Activated CD8-positive, alpha-beta T cell treated with anti-CD3 and anti-CD28 coated beads for 36 hours (primary cell): ENCODE measurements at regions of chr9 and their contacts with region 1.

Region 1: DNA sequence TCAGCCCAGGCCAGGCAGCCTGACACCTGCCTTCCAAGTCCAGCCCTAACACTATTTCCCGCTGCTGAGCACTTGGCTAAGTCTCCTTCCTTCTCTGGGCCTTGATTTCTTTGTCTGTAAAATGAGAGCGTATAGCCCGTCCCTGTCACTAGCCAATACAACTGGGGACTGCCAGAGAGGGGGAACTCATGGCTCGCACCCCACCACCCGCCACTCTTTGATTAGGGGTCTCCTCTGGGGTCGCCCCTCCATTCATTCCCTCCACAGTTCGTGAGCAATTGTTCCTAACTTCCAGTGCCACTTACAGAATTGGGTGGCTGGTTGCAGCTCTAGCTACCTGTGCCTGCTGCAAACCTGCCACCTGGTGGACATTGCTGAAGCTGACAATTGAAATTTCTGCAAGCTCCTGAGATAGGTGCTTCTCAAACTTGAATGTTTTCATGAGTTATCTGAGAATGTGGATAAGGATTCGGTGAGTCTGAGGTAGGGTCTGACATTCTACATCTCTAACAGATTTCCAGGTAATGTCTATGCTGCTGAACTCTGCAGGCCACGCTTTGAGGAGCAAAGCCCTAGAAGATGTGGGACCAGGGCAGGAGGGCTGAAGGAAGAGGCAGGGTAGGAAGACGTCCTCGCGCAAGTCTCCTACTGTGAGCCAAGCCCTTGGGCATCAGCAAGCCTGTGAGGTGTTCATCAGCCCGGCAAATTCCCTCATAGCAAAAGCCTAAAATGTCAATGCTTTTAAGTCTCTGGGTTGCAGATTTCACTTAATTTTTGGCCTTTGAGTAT is 13.3 kb upstream of the RECK start:
- DNase-seq: peak; percentile 78
- ATAC-seq: peak; percentile 75
- H3K4me3 Mint-ChIP-seq: no peak overlapping the region
- H3K27ac Mint-ChIP-seq: no peak overlapping the region
- H3K4me1 Mint-ChIP-seq: no peaks in the 10 kb centered on the region
- H3K27me3 Mint-ChIP-seq: no peaks in the 10 kb centered on the region
- CTCF ChIP-seq: peak; percentile 89

Region 2: GRCh38 chr9:35636135-35636876 is 387.1 kb before region 1 on chr9:
- CTCF ChIA-PET with region 1: no interaction called
- POLR2A ChIA-PET with region 1: no interaction called
- intact Hi-C with region 1: no loop called
- DNase-seq: no peak
- ATAC-seq: no peak
- H3K4me3 Mint-ChIP-seq: no peak overlapping the region
- H3K27ac Mint-ChIP-seq: peak overlapping the region; percentile 80
- H3K4me1 Mint-ChIP-seq: peaks cover 63% of the 10 kb centered on the region
- H3K27me3 Mint-ChIP-seq: no peaks in the 10 kb centered on the region
- CTCF ChIP-seq: no peak

Region 3: DNA sequence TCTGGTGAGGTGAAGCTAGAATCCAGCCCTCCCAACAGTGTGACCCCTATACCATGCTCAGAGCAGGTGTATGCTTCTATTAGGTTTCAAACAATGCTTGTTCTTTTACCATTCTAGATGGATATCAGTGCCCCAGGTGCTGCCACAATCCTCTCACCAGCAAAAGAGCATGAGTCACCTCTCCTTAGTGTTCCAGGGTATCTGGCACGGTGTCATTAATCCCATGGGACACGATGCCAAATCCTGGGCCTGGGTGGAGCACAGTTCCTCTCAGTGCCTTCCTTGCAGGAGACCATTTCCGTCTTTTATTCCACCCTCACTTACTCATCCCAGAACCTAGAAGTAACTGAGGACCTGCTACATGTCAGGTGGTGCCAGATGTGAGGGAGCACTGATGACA is 152.0 kb before region 1 on chr9:
- CTCF ChIA-PET with region 1: no interaction called
- POLR2A ChIA-PET with region 1: no interaction called
- intact Hi-C with region 1: no loop called
- DNase-seq: no peak
- ATAC-seq: no peak
- H3K4me3 Mint-ChIP-seq: no peak overlapping the region
- H3K27ac Mint-ChIP-seq: no peak overlapping the region
- H3K4me1 Mint-ChIP-seq: no peaks in the 10 kb centered on the region
- H3K27me3 Mint-ChIP-seq: peaks cover 2% of the 10 kb centered on the region
- CTCF ChIP-seq: no peak

Region 4: GRCh38 chr9:35945341-35946018 is 78.0 kb before region 1 on chr9:
- CTCF ChIA-PET with region 1: interaction called, 15 read pairs
- POLR2A ChIA-PET with region 1: no interaction called
- intact Hi-C with region 1: no loop called
- DNase-seq: peak; percentile 81
- ATAC-seq: peak; percentile 79
- H3K4me3 Mint-ChIP-seq: no peak overlapping the region
- H3K27ac Mint-ChIP-seq: no peak overlapping the region
- H3K4me1 Mint-ChIP-seq: peaks cover 20% of the 10 kb centered on the region
- H3K27me3 Mint-ChIP-seq: no peaks in the 10 kb centered on the region
- CTCF ChIP-seq: peak; percentile 96

Region 5: DNA sequence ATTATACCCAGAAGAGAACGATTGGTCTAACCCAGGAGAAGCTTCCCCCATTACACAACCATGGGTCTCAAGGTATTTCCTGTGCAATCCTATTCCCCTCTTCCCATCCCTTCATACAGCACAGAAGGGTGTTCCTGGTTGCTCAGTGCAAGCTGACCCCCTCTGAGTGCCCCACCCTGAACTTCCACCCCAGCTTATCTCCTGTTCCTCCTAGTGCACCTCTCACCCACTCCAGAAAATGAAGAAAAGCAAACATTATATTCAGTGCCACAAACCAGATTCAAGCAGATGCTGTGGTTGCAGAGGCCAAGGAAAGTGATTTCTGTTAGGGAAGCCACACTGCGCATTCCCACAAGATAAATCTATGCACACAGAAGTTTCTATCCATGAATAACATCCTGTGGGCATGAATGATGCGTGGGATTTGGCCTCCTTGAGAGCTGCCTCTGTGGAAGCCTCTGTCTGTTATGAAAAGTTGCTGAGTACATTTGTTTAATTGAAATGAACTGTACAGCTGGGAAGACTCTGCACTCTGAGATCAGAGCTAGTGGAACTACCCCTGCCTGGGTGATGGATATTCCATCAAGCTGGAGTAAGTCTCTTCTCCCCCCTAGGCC is 63.3 kb before region 1 on chr9:
- CTCF ChIA-PET with region 1: interaction called, 59 read pairs
- POLR2A ChIA-PET with region 1: no interaction called
- intact Hi-C with region 1: loop called (anchors 5 kb)
- DNase-seq: no peak
- ATAC-seq: no peak
- H3K4me3 Mint-ChIP-seq: no peak overlapping the region
- H3K27ac Mint-ChIP-seq: no peak overlapping the region
- H3K4me1 Mint-ChIP-seq: no peaks in the 10 kb centered on the region
- H3K27me3 Mint-ChIP-seq: no peaks in the 10 kb centered on the region
- CTCF ChIP-seq: no peak

Region 6: DNA sequence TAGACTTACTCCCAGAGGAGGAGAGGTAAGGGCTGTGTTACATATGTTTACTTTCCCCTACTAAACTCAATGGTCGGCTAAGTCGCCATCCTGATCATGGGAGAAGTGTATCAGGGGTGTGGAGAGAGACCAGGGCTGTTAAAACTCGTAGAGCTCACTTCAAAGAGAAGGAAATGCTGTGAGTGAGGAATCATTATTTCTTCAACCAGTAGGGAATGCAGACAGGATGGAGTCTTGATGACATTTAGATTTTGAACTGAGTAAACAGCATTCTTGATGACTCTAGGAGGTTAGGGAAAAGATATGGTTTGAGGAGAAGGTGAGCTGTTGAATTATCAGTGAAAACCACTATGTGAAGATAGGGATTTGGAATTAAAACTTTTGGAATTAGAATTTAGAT is 30.5 kb after region 1 on chr9:
- CTCF ChIA-PET with region 1: interaction called, 21 read pairs
- POLR2A ChIA-PET with region 1: interaction called, 5 read pairs
- intact Hi-C with region 1: no loop called
- DNase-seq: no peak
- ATAC-seq: no peak
- H3K4me3 Mint-ChIP-seq: no peak overlapping the region
- H3K27ac Mint-ChIP-seq: no peak overlapping the region
- H3K4me1 Mint-ChIP-seq: no peaks in the 10 kb centered on the region
- H3K27me3 Mint-ChIP-seq: no peaks in the 10 kb centered on the region
- CTCF ChIP-seq: no peak